ENCODE measurements at regions of chr18 and their contacts with region 1.

Region 1: DNA sequence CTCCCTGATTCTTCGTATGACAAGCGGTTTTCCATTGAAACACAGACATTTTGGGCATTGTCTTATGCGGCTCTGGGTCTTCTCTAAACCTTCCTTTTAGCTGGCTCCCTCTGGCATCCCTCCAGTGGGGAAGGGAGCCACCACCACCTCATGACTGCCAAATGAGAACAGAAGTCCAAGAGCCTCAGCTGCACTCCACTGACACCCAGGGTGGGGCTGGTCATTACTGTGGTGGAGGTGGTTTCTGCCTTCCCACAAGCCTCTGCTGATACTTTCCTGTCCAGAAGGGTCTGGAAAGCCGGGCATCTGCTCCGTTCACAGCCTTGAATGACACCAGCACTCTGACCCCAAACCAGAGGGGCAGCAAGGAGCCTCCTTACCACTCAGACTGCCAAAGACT is 213.5 kb downstream of the ZNF516 start:
- DNase-seq: no peak
- CTCF ChIP-seq: no peak

Region 2: GRCh38 chr18:76524900-76525698 is 243.5 kb after region 1 on chr18:
- in situ Hi-C with region 1: no loop called
- DNase-seq: no peak
- CTCF ChIP-seq: no peak

Region 3: DNA sequence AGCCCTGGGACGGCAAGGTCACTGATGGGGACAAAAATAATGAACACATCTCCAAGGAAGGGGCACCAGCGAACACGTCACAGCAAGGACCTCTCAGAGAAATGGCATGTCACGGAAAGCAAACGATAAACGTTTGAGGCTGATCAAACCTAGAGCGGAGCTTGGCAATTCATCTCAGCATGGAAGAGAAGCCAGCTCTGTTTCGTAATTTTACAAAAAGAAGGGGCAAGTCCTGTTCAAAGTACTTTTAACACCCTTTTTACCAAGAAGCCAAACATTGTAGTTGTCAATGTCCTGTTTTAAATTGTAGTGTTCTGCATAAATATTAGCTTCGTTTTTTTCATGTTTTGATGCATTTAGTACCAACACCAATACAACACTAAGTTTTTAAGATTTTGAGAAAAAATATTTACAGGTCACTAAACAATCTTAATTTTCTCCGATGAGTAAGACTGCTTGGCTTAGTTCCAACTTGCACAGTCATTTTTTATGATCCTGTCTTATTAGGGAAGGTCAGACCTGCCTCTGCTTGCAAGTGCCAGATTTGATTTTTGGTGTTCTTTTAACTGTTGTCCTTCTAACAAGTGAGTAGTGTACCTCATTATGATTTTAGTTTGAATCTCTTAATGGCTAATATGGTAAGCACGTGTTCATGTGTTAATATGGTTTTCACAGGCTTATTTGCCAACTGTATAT is 1879.5 kb after region 1 on chr18:
- in situ Hi-C with region 1: loop called (anchors 5 kb)
- DNase-seq: no peak
- CTCF ChIP-seq: no peak